ENCODE measurements at regions of chr17 and their contacts with region 1.

Region 1: DNA sequence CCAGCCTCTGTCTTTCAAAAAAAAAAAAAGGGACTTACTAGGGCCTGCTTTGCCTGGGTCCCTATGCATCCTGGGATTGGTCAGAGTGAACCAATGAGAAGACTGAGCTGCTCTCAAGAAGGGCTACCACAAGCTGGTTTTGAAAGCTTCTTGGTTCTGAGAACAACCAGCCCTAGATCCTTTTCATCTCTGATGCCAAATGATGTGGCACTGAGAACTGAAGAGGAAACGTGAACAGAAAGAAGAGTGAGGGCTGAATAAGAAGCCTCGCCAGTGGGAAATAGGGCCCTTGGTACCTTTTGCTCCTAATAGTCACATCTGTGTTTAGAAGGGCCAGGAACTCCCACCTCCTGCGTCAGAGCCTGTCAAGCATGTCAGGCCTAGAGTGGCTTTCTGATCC is 10.7 kb downstream of the TACO1 start:
- DNase-seq: no peak
- ATAC-seq: no peak
- H3K4me3 ChIP-seq: no peak overlapping the region
- H3K27ac ChIP-seq: no peak overlapping the region
- H3K4me1 ChIP-seq: no peaks in the 10 kb centered on the region
- H3K27me3 ChIP-seq: no peaks in the 10 kb centered on the region
- CTCF ChIP-seq: no peak
- EP300 ChIP-seq: no peak
- POLR2A ChIP-seq: no peak
- RAD21 ChIP-seq: no peak

Region 2: DNA sequence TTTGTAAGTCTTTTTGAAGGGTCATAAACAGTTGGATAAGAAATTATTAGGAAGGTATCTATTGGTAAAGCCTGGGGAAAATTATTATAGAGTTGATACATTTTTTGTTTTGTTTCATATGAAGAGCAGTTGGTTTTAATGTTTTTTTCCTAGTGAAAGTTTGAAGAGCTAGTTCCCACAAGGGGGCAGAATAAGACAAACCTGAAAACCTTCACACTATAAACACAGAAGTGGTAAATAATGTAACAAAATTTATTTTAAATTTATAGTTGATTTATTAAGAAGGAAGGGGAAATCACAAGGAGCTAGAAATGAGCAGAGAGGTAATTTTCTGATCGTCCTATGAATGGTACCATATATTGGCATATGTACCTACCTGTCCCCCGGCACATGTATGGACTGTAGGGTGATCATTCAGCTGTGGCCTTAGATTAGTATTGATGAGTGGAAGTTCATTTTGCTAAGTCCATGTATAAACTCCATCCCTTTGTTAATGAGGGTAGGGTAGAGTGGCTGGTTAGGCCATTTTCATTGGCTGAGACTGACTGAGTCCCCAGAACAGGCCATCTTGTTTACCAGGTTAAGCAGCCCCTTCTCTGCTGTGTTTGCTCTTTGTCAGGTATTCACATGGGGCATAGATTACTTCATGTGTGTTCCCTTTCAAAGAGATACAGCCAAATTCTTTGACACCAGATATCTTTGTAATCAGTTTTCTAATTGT is 528.9 kb before region 1 on chr17:
- CTCF ChIA-PET with region 1: no interaction called
- POLR2A ChIA-PET with region 1: no interaction called
- in situ Hi-C with region 1: no loop called
- intact Hi-C with region 1: loop called (anchors 5 kb)
- DNase-seq: peak in 1 of 4 experiments; percentile 26
- ATAC-seq: no peak; the same call in 2 of the 3 replicates
- H3K4me3 ChIP-seq: no peak overlapping the region
- H3K27ac ChIP-seq: no peak overlapping the region
- H3K4me1 ChIP-seq: no peaks in the 10 kb centered on the region
- H3K27me3 ChIP-seq: no peaks in the 10 kb centered on the region
- CTCF ChIP-seq: peak; percentile 9 to 56 (median 34); a peak in 3 of 6 replicates
- EP300 ChIP-seq: no peak
- POLR2A ChIP-seq: no peak
- RAD21 ChIP-seq: peak; percentile 62 to 67

Region 3: GRCh38 chr17:63425482-63425881 is 185.9 kb before region 1 on chr17:
- CTCF ChIA-PET with region 1: interaction called, 36 read pairs
- POLR2A ChIA-PET with region 1: interaction called, 6 read pairs
- in situ Hi-C with region 1: no loop called
- intact Hi-C with region 1: loop called (anchors 1 kb)
- DNase-seq: peak; percentile 76 to 88 (median 80)
- ATAC-seq: peak; percentile 89
- H3K4me3 ChIP-seq: no peak overlapping the region
- H3K27ac ChIP-seq: no peak overlapping the region
- H3K4me1 ChIP-seq: peaks cover 9 to 19% of the 10 kb centered on the region in 2 experiments
- H3K27me3 ChIP-seq: no peaks in the 10 kb centered on the region
- CTCF ChIP-seq: peak; percentile 91 to 96 (median 94)
- EP300 ChIP-seq: 0 out of 2 replicates have a peak, but pooled peaks have one; percentile 13
- POLR2A ChIP-seq: no peak
- RAD21 ChIP-seq: peak; percentile 98

Region 4: DNA sequence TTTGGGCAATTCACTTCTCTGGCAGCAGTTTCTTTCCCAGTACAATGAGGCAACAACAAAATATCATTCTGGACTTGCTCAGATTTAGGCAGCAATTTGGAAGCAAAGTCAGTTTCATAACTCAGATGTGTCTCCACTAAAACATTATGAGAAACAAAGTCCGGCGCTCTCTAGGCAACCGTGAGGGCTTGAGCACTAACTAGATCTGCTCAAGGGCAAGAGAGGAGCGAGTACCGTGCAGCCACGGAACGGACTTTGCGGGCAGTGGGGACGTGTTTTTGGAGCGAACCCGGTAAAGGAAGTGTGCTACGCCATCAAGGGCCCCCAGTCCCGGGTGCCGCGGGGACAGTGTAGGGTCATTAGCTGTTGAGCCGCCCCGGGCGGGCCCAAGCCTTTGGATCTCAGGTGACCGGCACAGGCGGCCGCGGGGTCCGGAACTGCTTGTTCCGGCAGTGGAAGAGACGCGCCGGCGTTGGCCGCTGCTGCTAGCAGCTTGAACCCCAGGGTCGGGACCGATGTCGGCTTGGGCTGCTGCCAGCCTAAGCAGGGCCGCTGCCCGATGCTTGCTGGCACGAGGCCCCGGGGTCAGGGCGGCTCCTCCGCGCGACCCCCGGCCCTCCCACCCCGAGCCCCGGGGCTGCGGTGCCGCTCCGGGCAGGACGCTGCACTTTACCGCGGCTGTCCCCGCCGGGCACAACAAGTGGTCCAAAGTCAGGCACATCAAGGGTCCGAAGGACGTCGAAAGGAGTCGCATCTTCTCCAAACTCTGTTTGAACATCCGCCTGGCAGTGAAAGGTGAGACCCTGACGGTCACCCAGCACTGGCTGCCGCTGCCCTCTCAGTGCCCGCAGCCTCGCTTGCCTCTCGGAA is 10.6 kb before region 1 on chr17 and contains the start of gene TACO1:
- CTCF ChIA-PET with region 1: no interaction called
- POLR2A ChIA-PET with region 1: interaction called, 13 read pairs
- in situ Hi-C with region 1: no loop called
- intact Hi-C with region 1: no loop called
- DNase-seq: peak; percentile 89 to 92 (median 92)
- ATAC-seq: peak; percentile 98
- H3K4me3 ChIP-seq: peak within 1 kb of the TSS; percentile 76
- H3K27ac ChIP-seq: peak within 1 kb of the TSS; percentile 78
- H3K4me1 ChIP-seq: peaks cover 13 to 18% of the 10 kb centered on the region in 2 experiments; a peak in 3 of 5 replicates
- H3K27me3 ChIP-seq: no peaks in the 10 kb centered on the region
- CTCF ChIP-seq: no peak
- EP300 ChIP-seq: no peak
- POLR2A ChIP-seq: peak; percentile 87
- RAD21 ChIP-seq: peak in 1 of 2 experiments; percentile 33; a peak in 2 of 4 replicates
- polyA plus RNA-seq, gene TACO1: 10.3 to 10.4 TPM

Measured in K562 (cell line).